Natural killer cell (primary cell): ENCODE measurements at regions of chr11 and their contacts with region 1.

Region 1: DNA sequence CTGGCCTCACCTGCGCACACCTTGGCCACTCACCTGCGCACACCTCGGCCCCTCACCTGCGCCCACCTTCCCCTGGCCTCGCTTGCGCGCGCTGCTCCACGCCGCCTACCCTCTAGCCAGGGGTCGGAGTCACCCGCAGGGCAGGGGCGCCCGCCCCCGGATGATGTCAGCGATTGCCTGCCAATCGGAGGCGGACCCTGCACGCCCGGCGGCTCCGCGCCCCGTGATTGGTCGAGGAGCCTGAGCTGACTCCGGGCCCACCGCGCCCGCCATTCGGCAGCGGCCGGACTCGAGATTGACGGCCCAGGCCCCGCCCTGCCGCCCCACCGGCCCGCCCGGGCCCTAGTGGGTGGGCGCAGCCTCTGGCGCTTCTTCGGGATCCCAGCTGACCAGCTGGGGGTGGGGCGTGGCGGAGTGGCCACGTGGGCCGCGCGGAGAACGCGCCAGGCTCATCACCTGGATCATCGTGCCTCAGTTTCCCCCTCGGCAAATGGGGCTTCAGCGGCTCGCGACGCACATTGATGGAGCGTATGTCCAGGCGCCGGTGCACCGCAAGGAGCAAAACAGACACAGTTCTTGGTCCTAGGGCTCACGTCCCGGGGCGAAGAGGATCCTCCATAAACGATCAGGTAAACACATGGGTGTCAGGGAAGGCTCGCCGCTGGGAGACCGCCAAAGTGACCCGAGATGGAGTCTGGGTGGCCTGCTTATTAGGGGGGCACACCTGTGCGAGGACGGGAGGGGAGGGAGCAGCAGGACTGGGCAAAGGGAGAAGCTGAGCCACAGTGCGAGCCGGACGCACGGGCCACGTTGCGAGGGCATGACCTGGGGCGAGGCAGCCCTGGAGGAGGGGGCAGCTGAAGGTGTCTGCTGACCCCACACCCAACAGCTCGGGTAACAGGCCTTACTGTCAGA is at the start of gene DHCR7:
- DNase-seq: peak; percentile 94 to 96
- ATAC-seq: peak; percentile 79 to 87 (median 83)
- H3K4me3 ChIP-seq: peak within 1 kb of the TSS; percentile 94
- H3K4me3 Mint-ChIP-seq: peak within 1 kb of the TSS; percentile 87
- H3K27ac ChIP-seq: peak within 1 kb of the TSS; percentile 77
- H3K27ac Mint-ChIP-seq: peak within 1 kb of the TSS; percentile 75 to 90
- H3K4me1 ChIP-seq: peaks cover 35% of the 10 kb centered on the region
- H3K4me1 Mint-ChIP-seq: peaks cover 30 to 50% of the 10 kb centered on the region in 2 donors
- H3K27me3 ChIP-seq: no peaks in the 10 kb centered on the region
- H3K27me3 Mint-ChIP-seq: no peaks in the 10 kb centered on the region
- CTCF ChIP-seq: no peak
- total RNA-seq, gene DHCR7: 12.5 to 18.1 (median 15.9) TPM

Region 2: GRCh38 chr11:71466368-71466767 is 17.9 kb after region 1 on chr11:
- intact Hi-C with region 1: no loop called
- DNase-seq: no peak
- ATAC-seq: no peak
- H3K4me3 ChIP-seq: no peak overlapping the region
- H3K4me3 Mint-ChIP-seq: no peak overlapping the region
- H3K27ac ChIP-seq: no peak overlapping the region
- H3K27ac Mint-ChIP-seq: no peak overlapping the region
- H3K4me1 ChIP-seq: no peaks in the 10 kb centered on the region
- H3K4me1 Mint-ChIP-seq: peaks cover 0 to 12% of the 10 kb centered on the region in 2 donors
- H3K27me3 ChIP-seq: no peaks in the 10 kb centered on the region
- H3K27me3 Mint-ChIP-seq: no peaks in the 10 kb centered on the region
- CTCF ChIP-seq: no peak

Region 3: GRCh38 chr11:71787098-71787823 is 338.7 kb after region 1 on chr11:
- intact Hi-C with region 1: loop called (anchors 10 kb)
- DNase-seq: peak; percentile 88 to 97
- ATAC-seq: peak; percentile 93 to 99 (median 93)
- H3K4me3 ChIP-seq: peak overlapping the region; percentile 59
- H3K4me3 Mint-ChIP-seq: peak overlapping the region; percentile 94
- H3K27ac ChIP-seq: peak overlapping the region; percentile 84
- H3K27ac Mint-ChIP-seq: peak overlapping the region; percentile 92 to 98
- H3K4me1 ChIP-seq: peaks cover 11% of the 10 kb centered on the region
- H3K4me1 Mint-ChIP-seq: peaks cover 5 to 18% of the 10 kb centered on the region in 2 donors
- H3K27me3 ChIP-seq: no peaks in the 10 kb centered on the region
- H3K27me3 Mint-ChIP-seq: peaks cover 0 to 3% of the 10 kb centered on the region in 2 donors
- CTCF ChIP-seq: no peak